AG04449 (cell line): ENCODE measurements at regions of chr19 and their contacts with region 1.

Region 1: GRCh38 chr19:17932485-17933338 is at the start of gene CCDC124:
- DNase-seq: peak; percentile 38
- H3K4me3 ChIP-seq: peak within 1 kb of the TSS; percentile 84
- CTCF ChIP-seq: peak; percentile 97

Region 2: DNA sequence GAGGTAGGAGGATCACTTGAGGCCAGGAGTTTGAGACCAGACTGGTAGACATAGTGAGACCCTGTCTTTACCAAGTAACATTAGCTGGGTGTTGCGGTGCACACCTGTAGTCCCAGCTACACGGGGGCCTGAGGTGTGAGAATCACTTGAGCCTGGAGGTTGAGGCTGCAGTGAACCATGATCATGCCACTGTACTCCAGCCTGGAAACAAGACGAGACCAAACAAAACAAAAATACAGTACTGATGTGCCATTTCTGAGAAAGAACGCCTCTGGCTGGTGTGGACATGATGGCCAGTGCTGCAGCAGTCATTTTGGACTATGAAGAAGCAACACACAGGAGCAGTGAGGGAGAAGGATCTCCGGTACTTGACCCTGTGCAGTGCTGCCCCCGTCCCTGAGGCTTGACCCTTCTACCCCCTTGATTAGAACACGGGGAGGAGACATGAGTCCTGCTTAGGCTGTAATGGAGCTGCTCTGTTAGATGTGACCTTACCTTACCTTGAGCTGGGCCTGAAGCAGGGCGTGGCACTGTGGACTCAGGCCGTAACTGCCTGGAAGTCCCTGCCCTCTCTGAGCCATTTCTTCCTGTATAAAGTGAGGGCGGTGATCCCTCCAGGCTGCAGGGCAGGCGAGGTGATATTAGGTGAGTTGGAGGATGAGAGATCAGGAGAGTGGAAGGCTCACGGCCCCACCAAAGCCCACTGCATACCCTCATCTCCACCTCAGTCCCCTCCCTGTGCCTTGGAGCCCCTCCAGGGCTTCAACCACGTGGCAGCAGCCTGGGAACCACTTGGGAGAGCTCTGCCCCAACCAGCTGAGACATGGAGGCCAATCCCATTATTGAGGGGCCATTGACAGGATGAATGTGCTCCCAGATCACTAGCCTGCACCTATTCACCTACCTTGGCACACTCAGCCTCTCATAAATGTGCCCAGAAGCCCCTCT is 67.1 kb before region 1 on chr19:
- CTCF ChIA-PET with region 1: interaction called, 157 read pairs
- POLR2A ChIA-PET with region 1: interaction called, 14 read pairs
- DNase-seq: no peak
- H3K4me3 ChIP-seq: no peak overlapping the region
- CTCF ChIP-seq: no peak

Region 3: GRCh38 chr19:17871878-17872250 is 60.8 kb before region 1 on chr19 and contains the start of gene SLC5A5:
- CTCF ChIA-PET with region 1: interaction called, 157 read pairs
- POLR2A ChIA-PET with region 1: interaction called, 6 read pairs
- DNase-seq: no peak
- H3K4me3 ChIP-seq: no peak within 1 kb of the TSS
- CTCF ChIP-seq: no peak

Region 4: DNA sequence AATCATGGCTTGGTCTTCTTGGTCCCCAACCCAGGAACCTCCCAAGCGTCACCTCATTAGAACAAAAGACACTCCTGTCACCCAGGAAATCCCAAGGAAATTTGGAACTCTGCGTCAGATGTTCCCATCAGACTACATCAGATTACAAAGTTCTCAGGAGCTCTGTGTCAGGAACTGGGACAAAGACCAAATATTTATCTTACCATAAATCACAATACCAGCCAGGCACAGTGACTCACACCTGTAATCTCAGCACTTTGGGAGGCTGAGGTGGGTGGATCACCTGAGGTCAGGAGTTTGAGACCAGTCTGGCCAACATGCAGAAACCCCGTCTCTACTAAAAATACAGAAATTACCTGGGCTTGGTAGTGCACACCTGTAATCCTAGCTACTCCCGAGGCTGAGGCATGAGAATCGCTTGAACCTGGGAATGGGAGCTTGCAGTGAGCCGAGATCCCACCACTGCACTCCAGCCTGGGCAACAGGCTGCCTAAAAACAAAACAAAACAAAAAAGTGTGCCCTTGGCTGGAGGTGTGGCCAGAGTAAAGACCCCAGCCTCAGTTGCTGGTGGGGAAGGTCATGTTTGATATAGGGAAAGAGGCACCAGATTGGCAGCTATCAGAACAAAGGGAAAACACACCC is 16.6 kb before region 1 on chr19:
- CTCF ChIA-PET with region 1: interaction called, 11 read pairs
- POLR2A ChIA-PET with region 1: no interaction called
- DNase-seq: no peak
- H3K4me3 ChIP-seq: no peak overlapping the region
- CTCF ChIP-seq: no peak

Region 5: DNA sequence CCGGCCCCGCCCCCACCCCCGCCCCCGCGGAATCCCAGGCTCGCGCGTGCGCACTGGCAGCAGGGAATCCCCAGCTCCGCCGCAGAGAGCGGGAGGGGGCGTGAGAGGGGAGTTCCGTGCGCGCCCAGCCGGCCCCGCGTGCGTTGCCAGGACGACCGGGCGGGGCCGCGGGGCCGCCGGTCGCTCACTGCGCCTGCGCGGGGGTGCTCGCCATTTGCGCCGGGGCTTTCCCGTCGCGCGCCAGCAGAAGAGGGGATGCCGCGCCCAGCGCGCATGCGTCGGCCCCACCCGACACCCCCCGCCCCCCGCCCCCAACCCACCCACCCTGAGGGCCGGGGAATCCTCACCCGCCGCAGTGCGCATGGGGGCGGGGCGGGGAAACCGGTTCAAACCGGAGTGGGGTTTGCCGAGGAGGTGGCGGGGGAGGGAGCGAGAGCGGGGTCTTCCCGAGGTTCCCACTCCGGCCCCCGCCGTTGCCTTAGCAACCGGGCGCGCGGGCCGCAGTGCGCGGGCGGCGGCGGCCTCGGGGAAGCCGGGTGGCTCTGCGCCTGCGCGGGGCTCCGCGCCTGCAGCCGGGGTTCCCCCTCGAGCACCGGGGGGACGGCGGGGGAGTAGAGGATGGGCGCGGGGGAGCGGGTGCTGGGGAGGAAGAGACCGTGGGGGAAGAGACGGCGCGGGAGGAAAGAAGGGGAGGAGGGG is 15.3 kb after region 1 on chr19:
- CTCF ChIA-PET with region 1: interaction called, 109 read pairs
- POLR2A ChIA-PET with region 1: no interaction called
- DNase-seq: no peak
- H3K4me3 ChIP-seq: peak overlapping the region; percentile 60
- CTCF ChIP-seq: no peak

Region 6: DNA sequence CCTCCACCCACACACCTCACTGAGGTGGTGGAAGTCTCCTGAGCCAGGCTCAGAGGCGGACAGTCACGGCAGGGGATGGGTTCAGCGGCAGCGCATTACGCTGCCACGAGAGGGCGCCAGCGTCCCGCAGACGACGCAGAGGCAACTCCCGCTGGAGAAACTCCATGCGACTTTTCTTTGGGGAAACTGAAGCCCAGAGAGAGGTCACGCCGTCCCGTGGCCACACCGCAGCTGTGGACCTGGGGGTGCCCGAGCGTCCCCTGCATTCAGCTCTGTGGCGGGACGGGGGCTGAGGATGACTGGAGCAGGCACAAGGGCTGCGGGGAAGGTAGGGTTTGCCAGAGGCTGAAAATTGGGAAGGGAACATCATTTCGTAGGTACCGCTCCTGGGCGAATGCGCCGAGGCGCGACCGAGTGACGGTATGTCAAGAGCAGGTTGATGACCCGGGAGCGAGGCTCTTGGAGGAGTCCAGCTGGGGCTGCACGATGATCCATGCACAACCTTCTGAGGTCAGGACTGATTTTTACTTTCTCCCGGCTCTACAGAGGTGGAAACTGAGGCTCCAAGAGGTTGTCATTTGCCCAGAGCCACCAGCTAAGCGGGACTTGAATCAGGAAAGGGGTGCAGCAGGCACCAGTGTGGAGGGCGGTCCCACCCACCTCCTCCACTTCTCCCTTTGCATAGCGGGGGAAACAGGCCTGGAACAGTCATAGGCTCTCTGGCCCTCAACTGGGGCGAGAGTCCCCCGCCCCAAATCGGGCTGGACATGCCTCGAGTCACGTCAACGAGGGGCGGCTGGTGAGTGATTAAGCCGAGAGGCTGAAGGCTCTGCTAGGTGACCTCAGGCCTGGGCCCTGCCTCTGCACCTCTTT is 74.6 kb after region 1 on chr19:
- CTCF ChIA-PET with region 1: interaction called, 666 read pairs
- POLR2A ChIA-PET with region 1: no interaction called
- DNase-seq: no peak
- H3K4me3 ChIP-seq: peak overlapping the region; percentile 60
- CTCF ChIP-seq: peak; percentile 97